ENCODE measurements at regions of chr1 and their contacts with region 1.

Region 1: DNA sequence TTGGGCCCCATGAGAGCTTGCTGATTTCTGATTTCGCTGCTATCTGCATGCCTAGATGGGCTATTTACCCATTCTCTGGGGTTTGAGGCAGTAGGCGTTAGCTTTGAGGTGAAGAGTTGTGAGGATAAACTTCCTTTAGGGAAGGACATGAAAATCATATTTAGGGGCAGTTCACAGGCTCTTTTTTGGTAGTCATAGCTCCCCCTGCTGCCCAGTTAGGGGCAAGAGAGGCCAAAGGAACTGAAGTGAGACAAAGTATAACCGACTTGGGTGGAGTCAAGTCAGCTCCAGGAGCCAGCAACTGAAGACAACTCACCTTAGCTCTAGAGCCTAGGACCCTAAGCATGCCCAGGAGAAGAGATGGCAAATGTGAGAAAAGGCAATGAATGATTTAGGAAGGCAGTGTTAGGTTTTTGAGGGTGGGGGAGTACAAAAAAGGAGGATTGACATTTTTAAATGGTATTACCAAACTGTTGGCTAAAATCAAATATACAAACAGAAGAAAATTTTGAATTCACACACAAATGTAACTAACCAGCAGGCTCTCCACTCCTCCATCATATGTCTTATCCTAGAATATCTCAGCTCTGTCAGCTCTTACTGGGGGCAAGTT is 625.2 kb downstream of the LMO4 start:
- DNase-seq: peak; percentile 85
- H3K4me3 Mint-ChIP-seq: no peak overlapping the region
- H3K27ac Mint-ChIP-seq: no peak overlapping the region
- H3K4me1 Mint-ChIP-seq: peaks cover 16% of the 10 kb centered on the region
- H3K27me3 Mint-ChIP-seq: no peaks in the 10 kb centered on the region
- CTCF ChIP-seq: peak; percentile 57

Region 2: DNA sequence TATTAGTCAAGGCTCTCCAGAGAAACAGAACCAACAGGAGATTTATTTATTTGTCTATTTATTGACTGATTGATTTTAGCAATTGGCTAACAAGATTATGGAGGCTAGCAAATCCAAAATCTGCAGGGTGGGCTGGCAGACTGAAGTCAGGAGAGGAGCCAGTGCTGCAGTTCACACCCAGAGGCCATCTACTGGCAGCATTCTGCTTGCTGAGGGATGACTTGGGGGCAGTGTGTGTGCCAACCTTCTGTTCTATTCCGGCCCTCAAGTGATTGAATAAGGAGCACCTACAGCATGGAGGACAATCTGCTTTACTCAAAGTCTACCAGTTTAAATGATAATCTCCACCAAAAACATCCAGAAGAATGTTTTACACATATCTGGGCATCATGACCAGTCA is 687.6 kb before region 1 on chr1:
- CTCF ChIA-PET with region 1: no interaction called
- POLR2A ChIA-PET with region 1: no interaction called
- intact Hi-C with region 1: no loop called
- DNase-seq: no peak
- H3K4me3 Mint-ChIP-seq: no peak overlapping the region
- H3K27ac Mint-ChIP-seq: no peak overlapping the region
- H3K4me1 Mint-ChIP-seq: no peaks in the 10 kb centered on the region
- H3K27me3 Mint-ChIP-seq: no peaks in the 10 kb centered on the region
- CTCF ChIP-seq: no peak

Region 3: DNA sequence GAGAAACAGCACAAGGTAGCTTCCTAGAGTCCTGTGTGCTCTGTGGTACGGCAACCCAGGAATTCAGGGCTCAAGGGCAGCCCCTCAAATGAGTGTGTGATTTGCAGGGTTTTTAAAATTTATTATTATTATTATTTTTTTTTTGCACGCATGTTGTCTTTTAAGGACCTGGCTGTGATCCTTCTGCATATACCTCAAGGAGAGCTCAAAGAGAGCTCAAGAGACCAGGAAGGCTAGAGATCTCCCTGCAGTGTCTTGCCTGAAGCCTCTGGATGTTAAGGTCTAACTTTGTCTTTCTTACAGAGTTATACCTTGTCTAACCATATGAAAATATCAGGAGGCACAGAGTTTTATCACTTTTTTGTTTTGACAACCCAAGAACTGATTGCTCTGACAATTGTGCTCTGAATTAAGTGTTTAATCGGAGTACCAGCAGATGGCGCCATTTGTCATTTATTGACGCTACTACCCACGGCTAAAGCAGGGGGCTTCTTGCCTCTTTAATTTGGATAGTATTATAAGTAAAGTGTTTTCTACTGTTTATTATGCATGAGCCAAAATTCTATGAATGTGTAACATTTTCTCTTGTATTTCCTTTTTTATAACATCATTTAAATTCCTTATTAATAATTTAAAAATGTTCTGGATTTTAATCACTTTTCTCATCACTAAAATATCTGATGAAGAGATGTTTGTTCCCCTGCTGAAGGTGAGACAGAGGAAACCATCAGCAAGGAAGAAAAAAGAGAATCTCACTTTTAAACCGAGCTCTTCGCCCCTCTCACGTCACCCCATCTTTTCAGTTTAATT is 660.9 kb before region 1 on chr1:
- CTCF ChIA-PET with region 1: interaction called, 33 read pairs
- POLR2A ChIA-PET with region 1: interaction called, 3 read pairs
- intact Hi-C with region 1: loop called (anchors 10 kb)
- DNase-seq: peak; percentile 69
- H3K4me3 Mint-ChIP-seq: no peak overlapping the region
- H3K27ac Mint-ChIP-seq: no peak overlapping the region
- H3K4me1 Mint-ChIP-seq: no peaks in the 10 kb centered on the region
- H3K27me3 Mint-ChIP-seq: peaks cover 25% of the 10 kb centered on the region
- CTCF ChIP-seq: peak; percentile 69

Region 4: DNA sequence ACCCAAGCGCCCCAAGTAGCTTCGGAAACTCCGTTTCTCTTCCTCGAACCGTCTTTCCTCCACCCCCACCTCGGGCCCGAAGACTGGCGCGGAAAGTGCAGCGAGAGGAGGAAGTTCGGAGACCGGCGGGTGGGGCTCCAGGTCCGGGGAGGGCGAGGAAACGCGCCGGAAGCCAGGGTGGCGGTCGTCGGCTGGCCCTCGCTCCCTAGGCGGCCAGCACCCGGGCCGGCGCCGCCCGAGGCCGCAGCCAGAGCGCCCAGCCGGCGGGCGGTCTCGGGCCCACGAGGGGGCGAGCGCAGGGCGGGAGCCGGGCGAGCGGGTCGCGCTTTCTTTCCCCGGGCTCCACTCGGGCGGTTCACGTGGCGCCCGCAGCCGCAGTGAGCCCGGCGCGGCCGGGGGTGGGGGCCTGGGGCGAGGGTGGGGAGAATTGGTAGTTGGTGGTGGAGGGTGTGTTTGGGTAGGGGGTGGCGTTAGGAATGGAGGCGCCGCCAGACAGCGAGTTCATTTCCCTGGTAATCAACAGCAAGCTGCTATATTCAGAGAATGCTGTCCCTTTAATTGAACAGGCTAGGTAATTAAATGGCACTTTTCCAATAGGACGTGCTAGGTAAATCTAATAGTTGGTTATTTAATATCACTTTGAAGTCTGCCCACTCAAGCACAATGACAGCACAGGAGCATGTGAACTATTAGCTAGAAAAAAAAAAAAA is 618.5 kb before region 1 on chr1:
- CTCF ChIA-PET with region 1: interaction called, 16 read pairs
- POLR2A ChIA-PET with region 1: interaction called, 11 read pairs
- intact Hi-C with region 1: no loop called
- DNase-seq: peak; percentile 39
- H3K4me3 Mint-ChIP-seq: peak overlapping the region; percentile 77
- H3K27ac Mint-ChIP-seq: peak overlapping the region; percentile 57
- H3K4me1 Mint-ChIP-seq: peaks cover 26% of the 10 kb centered on the region
- H3K27me3 Mint-ChIP-seq: no peaks in the 10 kb centered on the region
- CTCF ChIP-seq: peak; percentile 33

Region 5: DNA sequence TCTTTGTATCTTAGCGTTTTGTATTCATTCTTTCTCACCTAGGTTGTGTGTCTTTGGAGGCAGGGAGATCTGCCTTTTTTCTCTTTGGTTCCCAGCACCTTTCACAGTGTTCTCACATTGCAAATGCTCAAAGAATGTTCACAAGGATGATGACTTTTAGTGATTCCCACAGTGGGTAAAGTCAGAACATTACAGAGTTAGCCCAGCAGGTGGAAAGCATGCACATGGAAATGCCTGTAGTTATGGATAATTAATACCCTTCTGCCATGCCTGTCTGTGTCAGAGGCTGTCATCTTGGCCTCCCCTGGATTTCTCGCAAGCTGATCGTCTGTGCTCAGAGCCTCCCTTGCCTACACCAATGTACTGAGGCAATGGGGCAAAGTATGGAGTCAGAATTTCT is 166.3 kb before region 1 on chr1:
- CTCF ChIA-PET with region 1: interaction called, 9 read pairs
- POLR2A ChIA-PET with region 1: no interaction called
- intact Hi-C with region 1: loop called (anchors 1 kb)
- DNase-seq: no peak
- H3K4me3 Mint-ChIP-seq: no peak overlapping the region
- H3K27ac Mint-ChIP-seq: no peak overlapping the region
- H3K4me1 Mint-ChIP-seq: no peaks in the 10 kb centered on the region
- H3K27me3 Mint-ChIP-seq: no peaks in the 10 kb centered on the region
- CTCF ChIP-seq: no peak

Region 6: DNA sequence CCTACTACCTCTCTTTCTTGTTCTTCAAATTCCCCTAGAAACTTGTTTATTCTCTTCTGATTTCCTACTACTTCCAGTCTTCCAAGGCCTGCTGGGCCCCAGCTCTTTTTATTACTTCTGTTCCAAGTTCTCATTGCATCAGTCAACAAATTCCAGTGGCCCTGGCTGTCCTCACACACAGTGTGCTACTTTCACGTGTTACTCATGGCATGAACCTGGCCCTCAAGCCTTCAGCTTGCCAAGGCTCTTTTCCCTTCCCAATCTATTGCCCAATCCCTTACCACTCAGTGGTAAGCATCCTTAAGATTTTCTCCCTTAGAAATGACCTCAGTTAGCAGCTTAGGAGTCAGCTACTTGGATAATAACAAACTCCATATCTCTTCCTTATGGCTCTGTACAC is 11.7 kb before region 1 on chr1:
- CTCF ChIA-PET with region 1: interaction called, 15 read pairs
- POLR2A ChIA-PET with region 1: interaction called, 5 read pairs
- intact Hi-C with region 1: no loop called
- DNase-seq: no peak
- H3K4me3 Mint-ChIP-seq: no peak overlapping the region
- H3K27ac Mint-ChIP-seq: no peak overlapping the region
- H3K4me1 Mint-ChIP-seq: peaks cover 5% of the 10 kb centered on the region
- H3K27me3 Mint-ChIP-seq: no peaks in the 10 kb centered on the region
- CTCF ChIP-seq: no peak

Region 7: DNA sequence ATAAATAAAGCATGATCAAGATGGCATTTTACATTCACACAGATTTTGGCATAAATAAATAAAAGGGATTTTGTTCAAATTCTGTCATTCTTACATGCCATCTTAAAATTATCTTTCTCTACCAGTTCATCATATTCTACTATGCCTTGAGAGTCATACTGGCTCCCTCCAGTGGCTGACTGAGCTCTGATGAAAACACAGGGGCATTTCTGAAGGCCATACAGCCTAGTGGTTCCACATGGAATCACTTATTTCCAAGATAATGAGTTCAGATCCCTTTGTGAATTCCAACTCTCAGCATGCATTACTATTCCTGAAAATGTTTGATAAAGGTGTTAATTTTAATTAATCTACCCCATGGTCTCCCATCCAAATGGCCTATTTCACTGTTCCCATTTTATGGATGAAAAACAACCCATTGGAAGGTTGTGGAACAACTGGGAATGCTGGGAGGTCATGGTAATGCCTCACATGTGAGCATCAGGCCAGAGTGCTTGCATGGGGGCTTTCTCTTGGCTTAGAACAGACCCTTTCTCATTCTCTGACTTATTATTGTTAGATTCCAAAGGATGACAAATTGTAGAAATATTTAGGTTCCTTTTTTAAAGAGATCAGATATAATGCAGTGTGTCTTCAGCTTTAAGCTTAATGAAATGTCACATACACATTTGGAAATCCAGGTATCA is 107.8 kb after region 1 on chr1:
- CTCF ChIA-PET with region 1: interaction called, 8 read pairs
- POLR2A ChIA-PET with region 1: interaction called, 3 read pairs
- intact Hi-C with region 1: loop called (anchors 10 kb)
- DNase-seq: peak; percentile 70
- H3K4me3 Mint-ChIP-seq: no peak overlapping the region
- H3K27ac Mint-ChIP-seq: no peak overlapping the region
- H3K4me1 Mint-ChIP-seq: peaks cover 9% of the 10 kb centered on the region
- H3K27me3 Mint-ChIP-seq: no peaks in the 10 kb centered on the region
- CTCF ChIP-seq: peak; percentile 81

Region 8: GRCh38 chr1:88327391-88328267 is 373.8 kb after region 1 on chr1:
- CTCF ChIA-PET with region 1: no interaction called
- POLR2A ChIA-PET with region 1: no interaction called
- intact Hi-C with region 1: no loop called
- DNase-seq: peak; percentile 77
- H3K4me3 Mint-ChIP-seq: no peak overlapping the region
- H3K27ac Mint-ChIP-seq: no peak overlapping the region
- H3K4me1 Mint-ChIP-seq: peaks cover 6% of the 10 kb centered on the region
- H3K27me3 Mint-ChIP-seq: no peaks in the 10 kb centered on the region
- CTCF ChIP-seq: no peak